Naive thymus-derived CD4-positive, alpha-beta T cell (primary cell): ENCODE measurements at regions of chr3 and their contacts with region 1.

Region 1: DNA sequence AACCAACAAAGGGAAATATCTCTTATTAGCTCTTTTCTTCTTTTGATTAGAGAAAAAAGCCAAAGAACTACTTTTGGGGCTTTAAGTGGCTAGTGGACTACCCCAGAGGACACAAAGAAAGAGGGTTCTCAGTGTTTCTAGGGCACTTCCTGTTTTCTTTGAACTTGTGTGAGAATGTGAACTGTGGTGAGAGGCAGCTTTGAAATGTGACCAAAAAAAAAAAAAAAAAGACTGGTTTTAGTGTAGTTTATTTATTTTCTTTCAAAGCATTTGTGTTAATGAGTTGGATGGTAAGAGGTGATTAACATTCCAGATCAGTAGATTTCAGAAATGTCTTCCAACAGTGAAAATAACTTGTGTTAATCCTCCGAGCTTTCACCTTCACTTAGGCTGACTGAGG is 32.4 kb downstream of the SELENOT start:
- DNase-seq: peak in 4 of 9 donors; percentile 7 to 19 (median 10)
- ATAC-seq: peak; percentile 83
- H3K4me3 ChIP-seq: no peak overlapping the region
- H3K4me3 Mint-ChIP-seq: peak overlapping the region in 9 of 10 donors; percentile 6 to 64 (median 37)
- H3K27ac ChIP-seq: no peak overlapping the region
- H3K27ac Mint-ChIP-seq: peak overlapping the region in 7 of 9 donors; percentile 12 to 79 (median 41)
- H3K4me1 ChIP-seq: peaks cover 12 to 13% of the 10 kb centered on the region in 2 donors
- H3K4me1 Mint-ChIP-seq: peaks cover 10 to 34% (median 27%) of the 10 kb centered on the region in 7 donors
- H3K27me3 ChIP-seq: no peaks in the 10 kb centered on the region
- H3K27me3 Mint-ChIP-seq: no peaks in the 10 kb centered on the region

Region 2: DNA sequence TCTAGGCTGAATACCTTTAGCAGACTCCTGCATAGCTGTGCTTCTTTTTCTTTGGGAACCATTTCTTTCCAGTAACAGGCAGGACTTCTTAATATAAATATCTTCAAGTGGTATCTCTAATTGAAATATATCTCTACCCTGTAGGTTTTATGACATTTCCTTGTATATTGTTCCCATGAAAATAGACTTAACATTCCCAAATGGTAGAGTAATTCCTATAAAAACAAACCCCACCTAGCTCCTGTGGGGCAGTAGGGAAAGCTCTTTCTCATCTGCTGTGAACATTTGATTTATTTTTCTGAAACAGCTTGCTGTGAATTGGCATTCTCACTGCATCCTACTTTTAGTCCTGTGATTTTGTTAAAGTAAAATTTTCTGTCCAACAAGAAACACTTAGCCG is 11.6 kb before region 1 on chr3:
- CTCF ChIA-PET with region 1: interaction called, 3 read pairs
- POLR2A ChIA-PET with region 1: no interaction called
- intact Hi-C with region 1: loop called in 1 of 2 experiments (anchors 2 kb)
- DNase-seq: no peak
- ATAC-seq: no peak
- H3K4me3 ChIP-seq: no peak overlapping the region
- H3K4me3 Mint-ChIP-seq: no peak overlapping the region
- H3K27ac ChIP-seq: no peak overlapping the region
- H3K27ac Mint-ChIP-seq: peak overlapping the region in 4 of 9 donors; percentile 45 to 67 (median 54)
- H3K4me1 ChIP-seq: peaks cover 7 to 17% of the 10 kb centered on the region in 2 donors
- H3K4me1 Mint-ChIP-seq: peaks cover 21 to 50% (median 39%) of the 10 kb centered on the region in 7 donors
- H3K27me3 ChIP-seq: no peaks in the 10 kb centered on the region
- H3K27me3 Mint-ChIP-seq: no peaks in the 10 kb centered on the region

Region 3: DNA sequence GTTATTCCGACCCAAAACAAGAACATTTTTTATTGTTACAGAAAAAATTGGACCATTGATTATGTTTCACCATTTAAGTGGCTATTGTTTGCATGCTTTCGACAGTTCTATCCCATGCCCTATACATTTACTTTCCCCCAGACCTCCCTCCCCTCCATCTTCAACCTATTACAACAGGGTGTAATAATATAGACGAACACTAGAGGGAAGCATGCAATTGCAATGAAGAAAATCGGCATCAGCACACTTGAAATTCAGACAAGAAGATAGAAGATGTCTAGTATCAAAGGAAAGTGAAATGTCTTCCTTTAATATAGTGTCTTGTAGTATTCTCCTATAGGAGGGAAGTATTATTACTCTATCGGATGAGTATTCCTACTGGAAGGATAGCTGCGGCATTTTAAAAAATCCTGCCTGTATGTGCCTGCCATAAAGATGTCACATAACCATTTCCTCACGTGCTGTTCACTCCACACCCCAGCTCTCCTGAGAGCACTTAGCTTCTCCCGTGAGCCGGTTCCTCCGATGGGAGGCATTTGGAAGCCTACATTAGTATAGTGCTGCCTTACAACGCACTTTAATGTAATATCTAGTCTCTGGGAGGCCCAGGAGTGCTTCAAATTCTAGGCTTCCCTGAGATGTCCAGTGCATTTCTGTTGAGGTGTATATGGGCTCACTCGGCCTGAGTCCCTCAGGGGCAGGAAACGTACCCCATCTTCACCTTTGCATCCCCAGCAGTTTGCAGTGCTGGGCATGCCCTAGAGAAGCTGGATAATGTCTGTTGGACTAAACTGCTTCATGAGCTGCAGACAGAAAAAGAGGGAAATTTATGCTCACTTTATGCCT is 86.0 kb after region 1 on chr3:
- CTCF ChIA-PET with region 1: no interaction called
- POLR2A ChIA-PET with region 1: no interaction called
- intact Hi-C with region 1: no loop called
- DNase-seq: peak in 7 of 9 donors; percentile 33 to 77 (median 70)
- ATAC-seq: peak; percentile 94
- H3K4me3 ChIP-seq: no peak overlapping the region
- H3K4me3 Mint-ChIP-seq: peak overlapping the region in 1 of 10 donors; percentile 3
- H3K27ac ChIP-seq: no peak overlapping the region
- H3K27ac Mint-ChIP-seq: no peak overlapping the region
- H3K4me1 ChIP-seq: no peaks in the 10 kb centered on the region
- H3K4me1 Mint-ChIP-seq: peaks cover 0 to 19% (median 9%) of the 10 kb centered on the region in 7 donors
- H3K27me3 ChIP-seq: no peaks in the 10 kb centered on the region
- H3K27me3 Mint-ChIP-seq: no peaks in the 10 kb centered on the region